ENCODE measurements at regions of chr17 and their contacts with region 1.

Region 1: GRCh38 chr17:45277216-45277849 is 15.4 kb upstream of the SPATA32 start:
- DNase-seq: peak; percentile 85

Region 2: GRCh38 chr17:45172454-45173286 is 104.7 kb before region 1 on chr17:
- CTCF ChIA-PET with region 1: no interaction called
- POLR2A ChIA-PET with region 1: no interaction called
- DNase-seq: no peak

Region 3: GRCh38 chr17:45197555-45198334 is 79.6 kb before region 1 on chr17:
- CTCF ChIA-PET with region 1: no interaction called
- POLR2A ChIA-PET with region 1: no interaction called
- DNase-seq: peak; percentile 94

Region 4: GRCh38 chr17:45218895-45219661 is 58.3 kb before region 1 on chr17:
- CTCF ChIA-PET with region 1: interaction called, 12 read pairs
- POLR2A ChIA-PET with region 1: no interaction called
- DNase-seq: peak; percentile 86

Region 5: DNA sequence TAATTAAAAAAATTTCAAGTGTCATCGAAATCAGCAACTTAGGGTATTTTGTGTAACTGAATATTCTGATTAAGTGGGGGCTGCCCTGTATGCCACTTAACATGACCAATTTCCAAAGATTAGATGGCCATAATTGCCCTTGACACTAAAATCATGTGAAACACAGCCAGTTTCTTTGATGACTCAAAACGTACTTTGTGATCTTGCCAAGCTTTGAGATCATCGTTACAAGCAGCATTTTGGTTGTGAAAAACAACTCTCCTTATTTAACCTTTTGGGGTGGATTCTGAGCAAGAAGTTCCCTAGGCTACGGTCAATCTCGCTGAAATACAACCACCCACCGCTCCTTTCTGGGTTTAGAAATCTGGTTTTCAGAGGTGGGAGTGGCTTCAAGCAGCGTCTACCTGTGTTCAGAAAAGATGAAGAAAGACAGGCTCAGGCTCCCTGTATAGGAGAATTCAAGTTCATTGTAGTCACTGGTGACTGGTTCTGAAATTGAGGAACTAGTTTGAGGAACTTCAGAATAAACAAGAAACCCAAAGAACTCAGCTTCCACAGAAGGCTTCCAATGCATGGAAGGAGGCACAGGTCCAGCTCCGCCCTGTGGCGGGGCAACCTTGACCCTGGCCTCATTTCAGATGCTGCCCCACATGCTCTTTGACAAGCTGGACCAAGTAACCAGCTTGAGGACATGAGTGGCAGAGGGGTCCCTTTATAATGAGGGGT is 30.1 kb after region 1 on chr17:
- CTCF ChIA-PET with region 1: interaction called, 11 read pairs
- POLR2A ChIA-PET with region 1: interaction called, 4 read pairs
- DNase-seq: no peak

Region 6: DNA sequence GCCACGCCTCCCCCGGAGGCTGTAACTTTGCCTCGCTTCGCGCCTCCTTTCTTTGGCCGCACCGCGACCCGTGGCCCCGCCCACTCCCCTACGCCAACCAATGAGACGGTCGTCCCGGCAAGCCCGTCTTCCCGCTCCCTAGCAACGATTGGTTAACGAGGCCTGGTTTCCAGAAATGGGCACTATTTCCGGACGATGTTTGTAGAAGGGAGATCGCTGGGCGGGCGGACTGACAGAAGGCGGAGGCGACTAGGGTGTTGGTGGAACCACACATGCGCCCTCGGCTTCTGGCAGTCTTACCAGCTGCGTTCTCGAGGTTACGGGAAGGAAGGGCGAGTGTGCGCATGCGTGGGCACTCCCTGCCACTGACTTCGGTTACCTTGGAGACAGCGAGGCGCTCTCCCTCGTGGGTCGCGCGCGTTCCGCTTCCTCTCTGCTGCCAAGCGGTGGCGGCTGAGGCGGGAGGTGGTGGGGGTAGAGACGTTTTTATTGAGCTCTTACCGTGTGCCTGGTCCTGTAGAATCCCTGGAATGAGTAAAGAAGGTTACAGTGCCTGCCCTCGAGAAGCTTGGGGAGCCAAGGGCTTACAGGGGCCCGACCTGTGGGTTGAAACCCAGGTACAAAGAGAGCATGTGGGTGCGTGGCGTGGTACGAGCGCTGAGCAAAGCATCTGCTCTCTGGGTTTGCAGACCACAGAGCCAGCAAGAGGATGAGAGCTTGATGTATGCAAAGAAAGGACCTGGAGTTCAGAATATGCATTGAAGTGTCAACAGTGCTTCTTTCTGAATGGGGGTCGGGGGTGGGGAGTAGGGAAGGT is 40.0 kb after region 1 on chr17:
- CTCF ChIA-PET with region 1: interaction called, 12 read pairs
- POLR2A ChIA-PET with region 1: interaction called, 7 read pairs
- DNase-seq: peak; percentile 99

Region 7: DNA sequence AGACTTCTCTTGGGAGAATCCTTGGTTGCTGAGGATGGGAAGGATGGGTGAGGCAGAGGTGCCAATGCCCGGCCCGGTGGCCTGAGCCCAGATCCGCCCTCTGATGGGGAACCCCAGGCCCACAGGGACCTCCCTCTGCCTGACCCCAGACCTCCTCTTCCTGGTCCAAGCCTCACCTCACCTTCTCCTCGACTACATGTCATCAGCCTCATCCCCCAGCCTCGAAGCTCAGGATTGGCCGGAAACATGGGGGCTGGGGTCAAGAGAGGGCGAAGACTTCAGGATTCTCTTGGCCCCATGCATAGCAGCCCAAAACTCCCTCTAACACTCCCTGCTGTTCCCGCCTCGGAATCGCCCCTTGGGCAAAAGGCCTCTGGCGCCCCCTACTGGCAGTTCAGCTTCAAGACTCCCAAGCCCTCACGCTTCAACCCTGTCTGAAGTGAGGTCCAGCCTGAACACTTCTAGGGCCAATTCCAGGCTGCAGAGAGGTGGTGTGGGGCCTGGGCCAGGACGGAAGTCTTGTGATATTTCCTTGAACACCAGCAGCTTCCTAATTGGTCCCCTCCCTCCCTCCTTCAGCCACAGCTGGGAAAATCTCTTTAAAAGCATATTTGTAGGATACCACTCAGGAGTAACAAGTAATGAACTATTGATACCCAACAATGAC is 108.1 kb after region 1 on chr17:
- CTCF ChIA-PET with region 1: interaction called, 28 read pairs
- POLR2A ChIA-PET with region 1: interaction called, 5 read pairs
- DNase-seq: peak; percentile 86